ENCODE measurements at regions of chr6 and their contacts with region 1.

Region 1: DNA sequence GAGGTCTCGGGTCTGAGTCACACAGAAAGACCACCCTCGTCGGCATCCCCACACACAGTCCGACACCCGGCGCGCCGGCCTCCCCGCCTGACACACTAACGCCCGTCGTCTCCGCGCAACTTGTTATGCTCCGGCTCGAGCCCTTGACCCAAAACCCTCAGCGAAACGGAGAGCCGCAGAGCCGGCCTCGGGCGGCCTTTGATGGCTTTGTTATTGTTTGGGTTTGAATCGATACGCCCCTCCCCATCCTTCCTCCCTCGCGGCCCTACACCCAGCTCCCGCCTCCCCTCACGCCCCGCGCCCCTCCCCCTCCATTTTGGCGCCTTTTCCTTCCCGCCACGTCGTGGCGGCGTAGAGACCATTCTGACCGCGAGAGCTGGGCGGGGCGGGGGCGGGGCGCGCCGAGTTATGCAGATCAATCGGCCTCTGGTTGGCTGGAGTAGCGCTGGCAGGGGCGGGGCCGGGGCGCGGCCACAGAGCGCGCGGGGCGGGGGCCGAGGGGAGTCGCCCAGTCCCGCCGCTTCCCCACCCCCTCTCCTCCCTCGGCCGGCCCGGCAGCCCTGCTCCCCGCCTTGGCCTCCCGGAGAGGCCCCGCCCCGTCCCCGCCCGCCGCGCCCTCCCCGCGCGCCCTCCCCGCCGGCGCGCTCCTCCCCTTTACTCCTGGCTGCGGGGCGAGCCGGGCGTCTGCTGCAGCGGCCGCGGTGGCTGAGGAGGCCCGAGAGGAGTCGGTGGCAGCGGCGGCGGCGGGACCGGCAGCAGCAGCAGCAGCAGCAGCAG is at the start of gene PIM1:
- DNase-seq: peak; percentile 96 to 100 (median 99)
- H3K4me3 ChIP-seq: peak within 1 kb of the TSS; percentile 68 to 98 (median 90)
- H3K27ac ChIP-seq: peak within 1 kb of the TSS; percentile 55 to 98 (median 92)
- H3K27me3 ChIP-seq: no peaks in the 10 kb centered on the region
- CTCF ChIP-seq: peak in 10 of 56 donors; percentile 2 to 42 (median 16)
- total RNA-seq, gene PIM1: 8.8 to 61.4 (median 18.1) TPM

Region 2: GRCh38 chr6:36985808-36986703 is 183.6 kb before region 1 on chr6 and contains the start of gene MTCH1:
- intact Hi-C with region 1: loop called in 1 of 2 experiments (anchors 5 kb)
- DNase-seq: peak; percentile 77 to 94 (median 90)
- H3K4me3 ChIP-seq: peak within 1 kb of the TSS; percentile 58 to 100 (median 99)
- H3K27ac ChIP-seq: peak within 1 kb of the TSS; percentile 88 to 100 (median 99)
- H3K27me3 ChIP-seq: no peaks in the 10 kb centered on the region
- CTCF ChIP-seq: peak in 26 of 56 donors; percentile 1 to 57 (median 20)
- total RNA-seq, gene MTCH1: 246 to 500 (median 376) TPM

Region 3: DNA sequence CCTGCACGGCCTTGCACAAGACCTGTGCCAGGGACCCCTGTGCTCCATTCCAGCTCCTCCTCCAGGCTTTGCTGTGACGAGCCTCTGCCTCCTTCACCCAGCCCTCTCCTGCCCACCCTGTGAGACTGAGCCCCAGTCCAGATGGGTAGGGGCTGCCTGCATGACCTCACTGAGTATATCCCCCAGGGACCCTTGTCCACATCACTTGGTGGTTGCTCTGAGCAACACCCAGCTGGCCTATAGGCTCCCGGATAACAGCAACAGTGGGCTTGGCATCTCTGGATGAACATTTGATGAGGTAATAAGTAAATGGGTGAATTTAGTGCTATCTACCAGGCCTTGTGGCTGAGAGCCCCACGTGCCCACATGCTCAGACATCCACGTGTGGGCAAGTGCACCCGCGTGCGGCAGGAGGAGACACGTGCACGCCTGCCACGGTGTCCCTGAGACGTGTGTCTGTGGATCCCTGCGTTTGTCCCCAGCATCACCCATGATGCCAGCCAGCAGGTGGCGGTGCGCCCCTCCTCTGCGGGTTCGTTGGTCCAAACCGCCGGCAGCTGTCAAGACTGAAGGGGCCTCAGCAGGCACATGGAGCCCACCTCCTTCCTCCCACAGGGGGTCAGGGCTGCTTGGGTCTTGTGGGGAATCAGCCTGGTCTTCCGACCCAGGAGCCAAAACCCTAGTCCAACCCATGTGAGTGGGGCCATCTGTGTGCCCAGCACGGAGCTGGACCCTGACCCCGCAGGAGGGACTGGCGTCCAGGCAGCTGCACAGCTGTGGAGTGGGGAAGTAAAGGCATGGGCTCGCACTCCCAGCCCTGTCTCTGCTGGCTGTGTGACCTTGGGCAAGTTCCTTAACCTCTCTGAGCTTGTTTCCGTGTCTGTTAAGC is 118.3 kb before region 1 on chr6:
- intact Hi-C with region 1: loop called (anchors 1 kb)
- DNase-seq: peak; percentile 81 to 96 (median 94)
- H3K4me3 ChIP-seq: peak overlapping the region in 20 of 59 donors; percentile 1 to 38 (median 16)
- H3K27ac ChIP-seq: peak overlapping the region in 8 of 59 donors; percentile 3 to 64 (median 34)
- H3K27me3 ChIP-seq: no peaks in the 10 kb centered on the region
- CTCF ChIP-seq: peak; percentile 80 to 99 (median 95)

Region 4: DNA sequence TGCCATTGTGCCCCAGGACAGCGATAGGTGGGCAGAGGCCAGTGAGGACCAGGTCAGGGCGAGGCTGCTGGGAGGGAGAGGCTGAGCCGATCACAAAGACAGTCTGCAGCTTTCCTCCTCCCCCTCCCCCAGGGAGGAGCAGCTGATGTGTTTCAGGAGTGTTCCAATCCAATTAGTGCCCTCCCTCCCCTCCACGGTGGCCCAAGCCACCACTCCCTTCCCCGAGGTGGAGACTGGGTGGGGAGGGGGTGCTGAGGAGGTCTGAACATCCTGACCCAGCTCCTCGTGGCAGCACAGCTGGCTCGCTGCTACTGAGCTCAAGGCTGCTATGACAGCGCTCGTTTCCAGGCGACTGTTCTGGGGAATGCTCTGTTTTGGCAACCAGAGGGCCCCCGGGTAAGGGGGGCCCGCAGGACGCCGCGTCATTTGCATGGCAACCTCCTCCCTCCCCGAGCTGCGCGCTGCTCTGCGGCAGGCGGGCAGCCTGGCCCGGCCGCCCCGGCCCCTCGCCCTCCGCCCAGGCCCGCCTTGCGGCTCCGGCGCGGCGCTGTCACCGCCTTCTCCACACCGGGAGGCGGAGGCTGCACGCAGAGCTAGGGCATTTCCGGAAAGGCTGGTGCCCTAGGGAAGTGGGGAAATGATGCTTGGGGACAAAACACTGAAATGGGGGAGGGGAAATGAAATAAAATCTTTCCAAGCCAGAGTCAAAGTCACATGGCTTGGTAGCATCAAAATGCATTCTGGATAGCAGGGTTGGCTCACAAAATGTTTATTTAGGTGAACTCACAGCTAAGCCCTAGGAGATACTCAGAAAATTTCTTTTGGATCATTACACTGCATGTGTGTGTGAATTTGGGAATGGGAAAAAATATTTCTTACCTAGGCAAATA is 67.2 kb before region 1 on chr6:
- intact Hi-C with region 1: loop called (anchors 1 kb)
- DNase-seq: peak; percentile 72 to 93 (median 88)
- H3K4me3 ChIP-seq: peak overlapping the region; percentile 34 to 68 (median 52)
- H3K27ac ChIP-seq: peak overlapping the region; percentile 67 to 98 (median 96)
- H3K27me3 ChIP-seq: no peaks in the 10 kb centered on the region
- CTCF ChIP-seq: peak in 35 of 56 donors; percentile 2 to 58 (median 30)

Region 5: DNA sequence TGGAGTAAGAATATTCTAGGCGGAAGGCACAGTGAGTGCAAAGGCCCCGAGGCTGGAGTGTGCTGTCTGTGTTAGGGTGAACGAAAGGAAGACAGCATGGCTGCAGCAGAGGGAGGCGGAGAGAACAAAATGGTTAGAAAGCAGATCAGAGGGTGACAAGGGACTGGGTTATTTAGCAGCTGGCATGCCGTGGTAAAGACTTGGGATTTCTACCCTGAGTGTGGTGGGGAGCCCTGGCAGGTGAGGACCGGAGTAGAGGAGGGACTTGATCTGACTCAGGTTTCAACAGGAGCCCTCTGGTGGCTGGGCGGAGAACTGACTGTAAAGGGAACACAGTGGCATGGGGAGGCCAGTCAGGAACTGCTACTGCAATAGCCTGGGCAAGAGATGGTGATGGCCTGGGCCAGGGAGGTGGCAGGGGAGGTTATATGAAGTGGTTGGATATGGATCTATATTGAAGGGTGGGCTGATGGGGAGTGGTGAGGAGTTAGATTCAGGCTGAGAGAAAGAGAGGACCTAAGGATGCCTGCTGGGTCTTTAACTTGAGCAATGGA is 38.3 kb after region 1 on chr6:
- intact Hi-C with region 1: loop called (anchors 5 kb)
- DNase-seq: peak; percentile 46 to 86 (median 78)
- H3K4me3 ChIP-seq: no peak overlapping the region
- H3K27ac ChIP-seq: no peak overlapping the region
- H3K27me3 ChIP-seq: no peaks in the 10 kb centered on the region
- CTCF ChIP-seq: peak; percentile 19 to 75 (median 62)

Region 6: GRCh38 chr6:37239950-37240713 is 70.4 kb after region 1 on chr6:
- intact Hi-C with region 1: no loop called
- DNase-seq: peak in 7 of 10 donors; percentile 35 to 58 (median 50)
- H3K4me3 ChIP-seq: no peak overlapping the region
- H3K27ac ChIP-seq: peak overlapping the region in 9 of 59 donors; percentile 6 to 55 (median 23)
- H3K27me3 ChIP-seq: no peaks in the 10 kb centered on the region
- CTCF ChIP-seq: no peak

Region 7: GRCh38 chr6:37566111-37566949 is 396.6 kb after region 1 on chr6:
- intact Hi-C with region 1: no loop called
- DNase-seq: peak; percentile 53 to 85 (median 62)
- H3K4me3 ChIP-seq: peak overlapping the region; percentile 30 to 71 (median 56)
- H3K27ac ChIP-seq: peak overlapping the region in 39 of 59 donors; percentile 9 to 82 (median 53)
- H3K27me3 ChIP-seq: no peaks in the 10 kb centered on the region
- CTCF ChIP-seq: peak; percentile 54 to 94 (median 86)